Dendritic cell treated with granulocyte-macrophage colony-stimulating factor and Interleukin-4, amounts not matched to agents 40 ng/mL and 50 ng/mL, for 4 days (primary cell): ENCODE measurements at regions of chr19 and their contacts with region 1.

Region 1: GRCh38 chr19:41353466-41354342 is at the start of gene TGFB1:
- H3K4me3 Mint-ChIP-seq: peak within 1 kb of the TSS; percentile 100
- H3K27ac Mint-ChIP-seq: peak within 1 kb of the TSS; percentile 88
- H3K4me1 Mint-ChIP-seq: peaks cover 68% of the 10 kb centered on the region
- H3K27me3 Mint-ChIP-seq: no peaks in the 10 kb centered on the region

Region 2: DNA sequence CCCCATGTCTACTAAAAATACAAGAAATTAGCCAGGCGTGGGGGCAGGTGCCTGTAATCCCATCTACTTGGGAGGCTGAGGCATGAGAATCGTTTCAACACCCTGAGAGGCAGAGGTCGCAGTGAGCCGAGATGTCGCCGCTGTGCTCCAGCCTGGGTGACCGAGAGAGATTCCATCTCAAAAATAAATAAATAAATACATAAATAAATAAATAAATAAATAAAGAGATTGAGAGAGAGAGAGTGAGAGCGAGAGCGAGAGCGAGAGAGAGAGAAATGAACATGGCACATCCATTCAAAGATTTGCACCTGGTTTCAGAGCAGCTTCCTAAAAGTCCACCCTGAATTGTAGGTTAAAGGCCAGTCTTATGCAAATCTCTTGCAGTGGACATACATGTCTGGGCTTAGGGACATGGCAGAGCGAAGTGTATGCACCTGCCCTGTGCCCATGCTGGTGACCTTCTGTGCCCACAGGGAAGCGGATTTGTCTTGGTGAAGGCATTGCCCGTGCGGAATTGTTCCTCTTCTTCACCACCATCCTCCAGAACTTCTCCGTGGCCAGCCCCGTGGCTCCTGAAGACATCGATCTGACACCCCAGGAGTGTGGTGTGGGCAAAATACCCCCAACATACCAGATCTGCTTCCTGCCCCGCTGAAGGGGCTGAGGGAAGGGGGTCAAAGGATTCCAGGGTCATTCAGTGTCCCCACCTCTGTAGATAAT is 405.0 kb before region 1 on chr19:
- intact Hi-C with region 1: no loop called
- H3K4me3 Mint-ChIP-seq: no peak overlapping the region
- H3K27ac Mint-ChIP-seq: no peak overlapping the region
- H3K4me1 Mint-ChIP-seq: no peaks in the 10 kb centered on the region
- H3K27me3 Mint-ChIP-seq: peaks cover 29% of the 10 kb centered on the region

Region 3: DNA sequence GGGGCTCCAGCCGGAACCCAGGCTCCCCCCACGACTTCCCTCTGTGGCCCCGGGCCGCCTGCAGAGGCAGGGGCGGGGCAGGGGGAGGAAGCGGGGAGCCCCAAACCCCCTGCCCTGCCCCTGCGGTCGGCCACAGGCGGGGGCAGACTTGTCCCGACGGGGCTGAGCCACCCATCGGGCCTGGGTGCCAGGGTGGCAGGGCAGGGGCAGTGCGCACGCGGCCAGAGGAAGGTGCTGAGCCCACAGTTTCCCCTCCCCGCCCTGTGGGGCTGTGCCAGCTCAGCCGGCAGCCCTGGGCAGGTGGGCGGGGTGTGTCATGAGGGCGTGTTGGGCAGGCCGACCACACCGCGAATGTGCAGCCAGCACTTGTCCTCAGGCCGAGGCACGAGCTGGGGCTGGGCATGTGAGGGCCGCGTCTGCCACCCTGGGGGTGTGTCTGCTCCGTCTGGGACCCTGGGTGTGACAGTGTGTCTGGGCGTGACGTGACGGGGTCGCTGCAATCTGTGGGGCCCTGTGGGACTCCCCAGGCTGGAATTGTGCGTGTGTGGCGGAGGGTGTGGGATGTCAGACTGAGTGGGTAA is 26.0 kb before region 1 on chr19:
- intact Hi-C with region 1: loop called (anchors 1 kb)
- H3K4me3 Mint-ChIP-seq: peak overlapping the region; percentile 76
- H3K27ac Mint-ChIP-seq: peak overlapping the region; percentile 98
- H3K4me1 Mint-ChIP-seq: peaks cover 87% of the 10 kb centered on the region
- H3K27me3 Mint-ChIP-seq: no peaks in the 10 kb centered on the region

Region 4: GRCh38 chr19:41397086-41398049 is 43.7 kb after region 1 on chr19 and contains the starts of genes BCKDHA and EXOSC5:
- intact Hi-C with region 1: loop called (anchors 1 kb)
- H3K4me3 Mint-ChIP-seq: peak within 1 kb of the TSS; percentile 97
- H3K27ac Mint-ChIP-seq: peak within 1 kb of the TSS; percentile 93
- H3K4me1 Mint-ChIP-seq: peaks cover 55% of the 10 kb centered on the region
- H3K27me3 Mint-ChIP-seq: no peaks in the 10 kb centered on the region

Region 5: DNA sequence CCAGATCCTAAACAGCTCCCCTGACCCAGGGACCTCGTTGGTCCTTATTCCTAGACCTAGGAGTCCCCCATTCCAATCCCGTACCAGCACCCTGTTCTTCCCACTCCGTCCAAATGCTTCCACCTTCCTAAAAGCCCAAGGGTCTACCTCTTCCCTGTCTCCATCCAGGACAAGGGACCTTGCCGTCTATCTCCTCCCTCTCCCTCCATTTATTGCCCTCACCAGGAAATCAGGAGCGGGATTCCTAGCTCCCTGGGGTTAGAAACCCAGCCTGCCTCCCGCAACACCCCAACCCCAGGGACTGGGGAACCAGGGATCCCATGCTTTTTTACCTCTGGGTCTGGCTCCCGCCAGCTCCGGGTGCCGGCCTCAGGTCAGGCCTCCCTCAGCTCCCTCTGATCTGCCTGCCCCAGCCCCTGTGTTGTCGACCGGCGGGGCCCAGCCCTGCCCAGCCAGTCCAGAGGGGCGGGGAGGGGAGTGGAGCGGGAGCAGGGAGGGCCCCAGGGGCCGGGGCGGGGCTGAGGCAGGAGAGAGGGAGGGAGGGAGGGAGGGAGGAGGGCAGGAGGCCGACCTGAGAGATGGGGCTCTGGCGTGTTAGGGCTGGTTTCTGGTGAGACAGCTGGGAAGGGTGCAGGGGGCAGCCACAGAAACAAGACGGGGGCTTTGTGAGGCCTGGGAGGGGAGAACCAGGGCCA is 73.4 kb after region 1 on chr19 and contains the start of gene B3GNT8:
- intact Hi-C with region 1: loop called (anchors 10 kb)
- H3K4me3 Mint-ChIP-seq: peak within 1 kb of the TSS; percentile 83
- H3K27ac Mint-ChIP-seq: peak within 1 kb of the TSS; percentile 92
- H3K4me1 Mint-ChIP-seq: peaks cover 75% of the 10 kb centered on the region
- H3K27me3 Mint-ChIP-seq: no peaks in the 10 kb centered on the region